Vagina (tissue), 2 donors: ENCODE measurements at regions of chr19 and their contacts with region 1.

Region 1: GRCh38 chr19:54576411-54576976 is 2.9 kb downstream of the LILRA2 start:
- DNase-seq: peak; percentile 79 to 94
- H3K4me3 ChIP-seq: no peak overlapping the region
- H3K27ac ChIP-seq: no peak overlapping the region
- H3K4me1 ChIP-seq: no peaks in the 10 kb centered on the region
- H3K27me3 ChIP-seq: no peaks in the 10 kb centered on the region
- CTCF ChIP-seq: no peak
- POLR2A ChIP-seq: no peak

Region 2: DNA sequence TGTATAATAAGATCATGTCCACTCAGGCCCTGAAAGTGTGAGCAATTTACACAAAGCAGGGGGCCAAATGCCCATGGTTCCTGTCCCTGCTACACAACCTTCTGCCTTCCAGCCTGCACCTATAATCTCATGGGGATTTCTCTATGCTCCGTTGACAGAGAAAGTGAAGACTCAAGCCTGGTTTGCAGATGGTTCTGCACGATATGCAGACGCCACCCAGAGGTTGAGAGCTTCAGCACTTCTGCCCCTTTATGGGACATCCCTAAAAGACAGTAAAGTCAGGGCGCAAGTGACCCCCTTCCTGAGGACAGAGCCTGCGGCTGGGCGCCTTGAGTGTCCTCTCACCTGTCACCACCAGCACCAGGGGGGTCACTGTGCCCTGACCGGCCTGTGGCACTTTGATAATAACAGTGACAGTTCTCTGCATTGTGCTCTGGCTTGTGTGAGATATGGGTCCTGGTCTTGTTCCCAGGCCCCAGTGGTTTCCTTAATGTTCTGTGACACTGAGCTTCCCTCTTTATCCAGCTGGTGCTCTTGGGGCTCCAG is 278.7 kb before region 1 on chr19:
- intact Hi-C with region 1: loop called (anchors 5 kb)
- DNase-seq: peak in 1 of 2 donors; percentile 40
- H3K4me3 ChIP-seq: no peak overlapping the region
- H3K27ac ChIP-seq: no peak overlapping the region
- H3K4me1 ChIP-seq: no peaks in the 10 kb centered on the region
- H3K27me3 ChIP-seq: no peaks in the 10 kb centered on the region
- CTCF ChIP-seq: no peak
- POLR2A ChIP-seq: no peak

Region 3: DNA sequence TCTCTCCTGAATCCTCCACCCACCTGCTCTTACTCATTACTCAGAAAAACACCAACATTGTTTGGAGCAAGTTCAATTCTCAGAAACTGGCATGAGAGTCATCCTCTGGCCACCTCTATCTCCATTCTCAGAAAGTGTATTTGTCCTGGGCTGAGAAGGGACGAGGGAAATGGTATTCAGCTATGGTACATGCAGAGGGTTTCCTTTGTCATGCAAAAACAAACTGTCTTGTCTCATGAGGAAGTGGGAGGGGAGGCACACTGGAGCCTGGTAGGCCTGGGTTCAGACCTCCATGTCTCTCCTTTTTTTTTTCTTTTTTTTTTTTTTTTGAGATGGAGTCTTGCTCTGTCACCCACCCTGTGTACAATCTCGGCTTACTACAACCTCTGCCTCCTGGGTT is 34.8 kb before region 1 on chr19:
- intact Hi-C with region 1: no loop called
- DNase-seq: no peak
- H3K4me3 ChIP-seq: no peak overlapping the region
- H3K27ac ChIP-seq: no peak overlapping the region
- H3K4me1 ChIP-seq: no peaks in the 10 kb centered on the region
- H3K27me3 ChIP-seq: no peaks in the 10 kb centered on the region
- CTCF ChIP-seq: no peak
- POLR2A ChIP-seq: no peak

Region 4: GRCh38 chr19:54708781-54709180 is 132.3 kb after region 1 on chr19:
- intact Hi-C with region 1: no loop called
- DNase-seq: no peak
- H3K4me3 ChIP-seq: no peak overlapping the region
- H3K27ac ChIP-seq: no peak overlapping the region
- H3K4me1 ChIP-seq: no peaks in the 10 kb centered on the region
- H3K27me3 ChIP-seq: no peaks in the 10 kb centered on the region
- CTCF ChIP-seq: no peak
- POLR2A ChIP-seq: no peak